ENCODE measurements at regions of chr4 and their contacts with region 1.

Region 1: GRCh38 chr4:73729534-73730165 is 10.7 kb upstream of the CXCL8 start:
- DNase-seq: peak; percentile 50 to 74 (median 62)
- ATAC-seq: peak; percentile 95
- H3K4me3 ChIP-seq: no peak overlapping the region
- H3K27ac ChIP-seq: no peak overlapping the region
- H3K4me1 ChIP-seq: peaks cover 0 to 25% of the 10 kb centered on the region in 2 experiments; a peak in 4 of 5 replicates
- H3K27me3 ChIP-seq: no peaks in the 10 kb centered on the region
- CTCF ChIP-seq: peak; percentile 70 to 85 (median 80)
- EP300 ChIP-seq: no peak
- POLR2A ChIP-seq: no peak
- RAD21 ChIP-seq: peak; percentile 72 to 79

Region 2: DNA sequence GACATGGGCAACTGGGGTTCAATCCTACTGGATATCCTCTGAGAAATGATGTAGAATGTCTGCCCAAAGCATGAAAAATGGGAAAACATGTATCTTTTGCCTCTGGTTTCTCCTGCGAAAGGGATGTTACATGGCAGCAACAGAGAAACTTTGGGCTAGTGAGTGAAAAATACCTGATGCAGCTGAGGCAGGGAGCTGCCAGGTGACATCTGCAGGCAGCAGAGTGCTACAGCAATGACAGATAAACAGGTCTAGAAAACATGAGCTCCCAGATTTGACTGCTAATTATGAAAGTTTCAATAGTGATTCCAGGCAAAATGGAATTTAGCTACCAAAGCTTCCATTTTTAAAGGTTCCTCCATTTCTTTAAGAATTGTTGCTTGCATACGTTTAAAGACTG is 134.7 kb after region 1 on chr4:
- CTCF ChIA-PET with region 1: no interaction called
- POLR2A ChIA-PET with region 1: no interaction called
- in situ Hi-C with region 1: no loop called
- intact Hi-C with region 1: loop called (anchors 1 kb)
- DNase-seq: peak in 2 of 4 experiments; percentile 46 to 56
- ATAC-seq: peak; percentile 64
- H3K4me3 ChIP-seq: no peak overlapping the region
- H3K27ac ChIP-seq: no peak overlapping the region
- H3K4me1 ChIP-seq: peaks cover 7 to 9% of the 10 kb centered on the region in 2 experiments; a peak in 4 of 5 replicates
- H3K27me3 ChIP-seq: no peaks in the 10 kb centered on the region
- CTCF ChIP-seq: peak; percentile 72 to 73 (median 72)
- EP300 ChIP-seq: no peak
- POLR2A ChIP-seq: no peak
- RAD21 ChIP-seq: peak; percentile 69 to 76

Region 3: GRCh38 chr4:73922766-73923630 is 193.3 kb after region 1 on chr4:
- CTCF ChIA-PET with region 1: no interaction called
- POLR2A ChIA-PET with region 1: no interaction called
- in situ Hi-C with region 1: no loop called
- intact Hi-C with region 1: loop called (anchors 5 kb)
- DNase-seq: peak in 1 of 4 experiments; percentile 36
- ATAC-seq: no peak
- H3K4me3 ChIP-seq: no peak overlapping the region
- H3K27ac ChIP-seq: no peak overlapping the region
- H3K4me1 ChIP-seq: no peaks in the 10 kb centered on the region; a peak in 1 of 5 replicates
- H3K27me3 ChIP-seq: no peaks in the 10 kb centered on the region
- CTCF ChIP-seq: peak in 1 of 3 experiments; percentile 58; a peak in 3 of 6 replicates
- EP300 ChIP-seq: no peak
- POLR2A ChIP-seq: no peak
- RAD21 ChIP-seq: peak; percentile 61 to 76

Region 4: DNA sequence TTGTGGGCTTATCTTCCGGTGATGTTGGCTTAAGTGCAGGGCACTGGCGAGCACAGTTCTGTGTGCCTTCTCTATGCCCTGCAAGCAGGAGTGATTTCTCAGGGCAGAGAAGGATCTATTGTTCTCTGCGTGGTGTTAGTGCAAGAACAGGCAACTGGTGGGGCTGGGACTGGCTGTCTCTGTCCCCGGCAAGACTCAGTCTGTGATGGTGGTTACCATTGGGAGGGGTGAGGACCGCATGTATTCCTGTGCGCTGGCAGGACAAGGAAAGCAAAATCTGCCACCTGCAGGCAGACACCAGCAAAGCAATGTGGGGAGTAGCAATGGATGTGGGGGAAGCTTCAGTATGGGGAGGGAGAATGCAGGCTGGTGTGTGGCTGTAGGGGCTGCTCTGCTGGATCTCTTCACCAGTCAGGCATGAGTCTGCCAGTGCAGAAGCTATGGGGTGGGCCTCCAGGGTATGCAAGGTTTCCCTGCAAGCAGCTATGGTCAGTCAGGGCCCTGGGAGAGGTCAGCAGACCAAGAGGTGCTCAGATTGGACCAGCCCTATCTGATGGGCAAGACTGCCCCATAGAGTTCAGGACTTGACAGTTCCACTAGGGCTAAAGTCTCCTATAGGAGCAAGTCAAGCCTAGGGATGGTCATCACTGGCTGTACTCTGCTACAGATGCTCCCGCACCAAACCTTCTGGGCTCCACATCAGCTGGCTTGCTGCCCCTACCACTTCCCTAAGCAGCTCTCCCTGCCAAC is 235.4 kb after region 1 on chr4:
- CTCF ChIA-PET with region 1: no interaction called
- POLR2A ChIA-PET with region 1: no interaction called
- in situ Hi-C with region 1: no loop called
- intact Hi-C with region 1: no loop called
- DNase-seq: peak in 2 of 4 experiments; percentile 27 to 32
- ATAC-seq: peak; percentile 91
- H3K4me3 ChIP-seq: no peak overlapping the region
- H3K27ac ChIP-seq: no peak overlapping the region
- H3K4me1 ChIP-seq: no peaks in the 10 kb centered on the region
- H3K27me3 ChIP-seq: no peaks in the 10 kb centered on the region
- CTCF ChIP-seq: peak; percentile 37 to 51 (median 40); a peak in 5 of 6 replicates
- EP300 ChIP-seq: no peak
- POLR2A ChIP-seq: no peak
- RAD21 ChIP-seq: peak in 1 of 2 experiments; percentile 44; a peak in 2 of 4 replicates

Region 5: DNA sequence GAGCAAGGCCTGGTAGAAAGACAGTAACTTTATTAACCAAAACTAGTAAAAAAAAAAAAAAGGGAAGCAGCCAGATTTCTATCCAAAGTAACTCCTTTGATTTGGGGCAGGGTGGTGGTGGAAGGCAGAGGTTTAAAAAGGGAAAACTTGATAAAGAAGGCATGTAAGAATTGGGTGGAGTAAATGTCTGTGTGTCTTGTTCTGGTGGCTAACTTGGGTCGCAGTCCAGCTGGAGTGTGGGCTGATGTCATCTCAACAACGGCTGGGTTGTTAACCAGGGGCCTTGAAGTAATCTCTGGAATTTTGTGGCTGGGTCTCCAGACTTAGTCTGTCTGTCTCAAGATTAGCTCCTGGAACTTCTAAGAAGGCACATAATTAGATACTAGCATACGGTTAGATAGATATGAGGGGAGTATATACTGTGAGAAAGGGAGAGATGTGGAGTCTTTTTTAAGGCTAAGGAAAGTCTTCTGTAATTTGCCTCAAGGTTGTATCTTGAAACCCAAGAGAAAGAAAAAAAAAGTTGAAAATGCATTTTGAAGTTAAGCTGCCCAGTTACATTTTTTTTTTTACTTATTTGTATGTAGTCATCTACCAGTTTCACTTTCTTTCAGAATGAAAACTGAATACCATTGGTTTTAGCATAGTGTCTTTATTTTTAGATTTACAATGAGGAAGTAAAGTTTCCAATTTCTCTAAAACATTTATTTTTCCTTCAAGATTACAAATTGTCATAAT is 476.6 kb after region 1 on chr4:
- CTCF ChIA-PET with region 1: no interaction called
- POLR2A ChIA-PET with region 1: no interaction called
- in situ Hi-C with region 1: no loop called
- intact Hi-C with region 1: no loop called
- DNase-seq: peak in 3 of 4 experiments; percentile 12 to 86 (median 67)
- ATAC-seq: peak; percentile 92
- H3K4me3 ChIP-seq: no peak overlapping the region
- H3K27ac ChIP-seq: peak overlapping the region; percentile 59; the same call in 2 of the 3 replicates
- H3K4me1 ChIP-seq: peaks cover 4 to 18% of the 10 kb centered on the region in 2 experiments; a peak in 3 of 5 replicates
- H3K27me3 ChIP-seq: no peaks in the 10 kb centered on the region
- CTCF ChIP-seq: no peak
- EP300 ChIP-seq: peak; percentile 64; the same call in 1 of the 2 replicates
- POLR2A ChIP-seq: no peak
- RAD21 ChIP-seq: no peak

Measured in K562 (cell line).